ENCODE measurements at regions of chr14 and their contacts with region 1.

Region 1: GRCh38 chr14:71320107-71320733 is 413.0 kb downstream of the PCNX1 start:
- DNase-seq: peak; percentile 98
- H3K4me3 Mint-ChIP-seq: peak within 1 kb of the TSS; percentile 94
- H3K27ac Mint-ChIP-seq: peak within 1 kb of the TSS; percentile 97
- H3K4me1 Mint-ChIP-seq: peaks cover 54% of the 10 kb centered on the region
- H3K27me3 Mint-ChIP-seq: peaks cover 2% of the 10 kb centered on the region

Region 2: GRCh38 chr14:70887207-70887681 is 433.0 kb before region 1 on chr14:
- intact Hi-C with region 1: loop called (anchors 2 kb)
- DNase-seq: no peak
- H3K4me3 Mint-ChIP-seq: peak overlapping the region; percentile 73
- H3K27ac Mint-ChIP-seq: peak overlapping the region; percentile 88
- H3K4me1 Mint-ChIP-seq: peaks cover 98% of the 10 kb centered on the region
- H3K27me3 Mint-ChIP-seq: no peaks in the 10 kb centered on the region

Region 3: DNA sequence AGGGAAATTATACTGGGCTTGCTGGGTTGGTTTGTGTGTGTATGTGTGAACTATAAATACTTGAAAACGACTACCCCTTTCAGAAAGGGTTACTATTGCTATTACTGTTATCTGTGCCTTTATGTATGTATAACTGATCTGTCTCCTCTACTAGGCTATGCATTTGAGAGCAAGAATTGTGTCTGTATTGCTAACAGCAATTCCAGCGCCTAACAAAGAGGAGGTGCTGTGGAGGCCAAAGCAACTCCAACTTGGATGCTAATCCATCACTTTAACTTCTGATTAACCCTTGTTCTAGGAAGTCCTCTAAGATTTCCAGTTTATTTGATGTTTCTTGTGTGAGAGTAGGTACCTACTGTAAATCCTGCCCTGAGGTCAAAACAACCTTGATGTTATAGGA is 99.1 kb before region 1 on chr14:
- intact Hi-C with region 1: loop called (anchors 1 kb)
- DNase-seq: no peak
- H3K4me3 Mint-ChIP-seq: no peak overlapping the region
- H3K27ac Mint-ChIP-seq: no peak overlapping the region
- H3K4me1 Mint-ChIP-seq: peaks cover 34% of the 10 kb centered on the region
- H3K27me3 Mint-ChIP-seq: peaks cover 3% of the 10 kb centered on the region

Region 4: DNA sequence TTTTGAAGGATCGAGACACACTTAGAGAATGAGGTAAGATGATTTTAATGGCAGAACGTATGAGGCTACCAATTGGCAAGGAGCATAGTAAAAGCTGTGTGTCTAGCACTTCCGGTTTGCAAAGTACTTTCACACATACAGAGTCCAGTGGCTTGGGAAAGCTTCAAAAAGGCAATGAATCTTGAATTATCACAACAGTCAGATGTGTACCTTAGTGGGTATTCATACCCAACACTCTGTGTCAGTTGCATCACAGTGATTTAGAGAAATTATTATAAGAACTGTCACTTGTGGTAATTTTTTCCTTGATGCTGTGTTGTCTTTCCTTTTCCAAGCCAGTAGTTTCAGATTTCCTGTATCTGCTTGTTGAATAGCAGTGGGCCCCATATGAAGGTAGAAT is 11.2 kb after region 1 on chr14:
- intact Hi-C with region 1: loop called (anchors 1 kb)
- DNase-seq: no peak
- H3K4me3 Mint-ChIP-seq: peak overlapping the region; percentile 42
- H3K27ac Mint-ChIP-seq: peak overlapping the region; percentile 89
- H3K4me1 Mint-ChIP-seq: peaks cover 71% of the 10 kb centered on the region
- H3K27me3 Mint-ChIP-seq: no peaks in the 10 kb centered on the region

Region 5: DNA sequence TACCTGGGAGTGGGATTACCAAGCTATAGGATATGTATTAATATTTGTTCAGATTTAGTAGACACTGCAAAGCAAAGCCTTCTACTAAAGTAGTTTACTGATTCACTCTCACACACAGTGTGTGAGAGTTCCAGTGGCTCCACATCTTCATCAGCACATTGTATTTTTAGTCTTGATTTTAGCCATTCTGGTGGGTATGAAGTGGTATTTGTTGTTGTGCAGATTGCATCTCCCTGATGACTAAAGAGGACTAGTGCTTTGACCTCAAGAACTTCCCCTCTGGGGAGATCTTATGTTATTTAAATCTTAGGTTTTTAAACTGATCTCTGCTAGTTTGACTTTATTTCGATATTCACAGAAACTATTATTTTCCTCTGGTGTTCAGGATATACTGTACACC is 132.3 kb after region 1 on chr14:
- intact Hi-C with region 1: loop called (anchors 2 kb)
- DNase-seq: no peak
- H3K4me3 Mint-ChIP-seq: no peak overlapping the region
- H3K27ac Mint-ChIP-seq: peak overlapping the region; percentile 44
- H3K4me1 Mint-ChIP-seq: peaks cover 34% of the 10 kb centered on the region
- H3K27me3 Mint-ChIP-seq: no peaks in the 10 kb centered on the region

Region 6: DNA sequence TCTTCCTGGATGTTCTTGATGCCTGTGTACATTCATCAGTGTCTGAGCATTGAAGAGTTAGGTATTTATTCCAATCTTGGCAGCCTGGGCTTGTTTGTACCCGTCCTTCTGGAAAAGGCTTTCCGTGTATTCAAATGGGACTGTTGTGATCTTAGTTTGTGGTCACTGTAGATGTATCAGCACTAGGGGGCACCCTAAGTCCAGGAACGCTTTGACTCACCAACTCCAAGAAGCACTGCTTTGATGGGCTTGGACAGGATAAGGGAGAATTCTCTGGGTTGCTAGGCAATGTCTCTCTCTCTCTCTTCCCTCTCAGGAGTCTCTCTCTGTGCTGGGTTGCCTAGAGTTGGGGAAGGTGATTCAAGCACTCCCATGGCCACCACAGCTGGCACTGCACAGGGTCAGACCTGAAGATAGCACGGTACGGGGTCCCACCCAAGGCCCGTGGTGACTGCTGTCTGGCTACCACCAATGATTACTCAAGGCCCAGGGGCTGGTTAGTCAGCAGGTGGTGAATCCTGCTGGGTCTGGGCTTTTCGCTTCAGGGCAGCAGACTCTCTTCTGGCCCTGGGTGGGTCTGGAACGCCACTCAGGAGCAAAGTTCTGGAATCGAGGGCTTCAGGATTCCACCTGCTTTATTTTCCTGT is 400.9 kb after region 1 on chr14:
- intact Hi-C with region 1: loop called (anchors 10 kb)
- DNase-seq: no peak
- H3K4me3 Mint-ChIP-seq: no peak overlapping the region
- H3K27ac Mint-ChIP-seq: peak overlapping the region; percentile 18
- H3K4me1 Mint-ChIP-seq: peaks cover 11% of the 10 kb centered on the region
- H3K27me3 Mint-ChIP-seq: no peaks in the 10 kb centered on the region

Measured in activated T-helper 1 cell treated with anti-CD3 and anti-CD28 coated beads, Interleukin-12 subunit alpha, Interleukin-12 subunit beta, Interleukin-2, Interleukin-4 antibody, amounts not matched to agents 30 ng/mL and 10 ng/mL and 1 ng/mL, durations not matched to agents 14 hours and 24 hours and 36 hours (primary cell).